ENCODE measurements at regions of chr2 and their contacts with region 1.

Region 1: DNA sequence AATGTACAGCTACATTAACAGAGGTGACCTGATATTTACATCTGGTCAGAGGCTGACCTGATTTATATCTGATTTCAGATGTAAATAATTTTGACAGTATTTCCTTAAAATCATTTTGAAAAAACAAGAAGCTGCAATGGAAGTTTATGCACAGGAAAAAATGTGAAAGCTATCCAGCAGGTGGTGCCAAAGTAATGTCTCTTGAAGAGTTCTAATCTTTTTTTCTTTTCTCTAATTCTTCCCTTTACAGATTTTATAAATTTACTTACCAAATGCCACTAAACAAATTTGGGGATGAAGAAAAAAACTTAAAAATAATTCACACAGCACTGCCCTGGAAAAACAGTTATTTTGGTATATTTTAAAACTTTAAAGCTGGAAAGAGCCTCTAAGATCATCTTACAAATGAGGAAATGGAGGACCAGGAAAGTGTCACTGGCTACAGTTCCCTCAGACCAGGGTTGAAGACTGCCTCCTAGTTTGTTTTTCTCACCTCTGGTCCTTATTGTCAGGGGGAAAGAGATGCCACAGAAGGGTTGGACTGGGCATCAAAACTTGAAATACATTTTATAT is 16.4 kb upstream of the FBLN7 start:
- DNase-seq: peak; percentile 62
- ATAC-seq: no peak
- H3K4me3 Mint-ChIP-seq: no peak overlapping the region
- H3K27ac Mint-ChIP-seq: no peak overlapping the region
- H3K4me1 Mint-ChIP-seq: peaks cover 7% of the 10 kb centered on the region
- H3K27me3 Mint-ChIP-seq: no peaks in the 10 kb centered on the region
- CTCF ChIP-seq: peak; percentile 88

Region 2: DNA sequence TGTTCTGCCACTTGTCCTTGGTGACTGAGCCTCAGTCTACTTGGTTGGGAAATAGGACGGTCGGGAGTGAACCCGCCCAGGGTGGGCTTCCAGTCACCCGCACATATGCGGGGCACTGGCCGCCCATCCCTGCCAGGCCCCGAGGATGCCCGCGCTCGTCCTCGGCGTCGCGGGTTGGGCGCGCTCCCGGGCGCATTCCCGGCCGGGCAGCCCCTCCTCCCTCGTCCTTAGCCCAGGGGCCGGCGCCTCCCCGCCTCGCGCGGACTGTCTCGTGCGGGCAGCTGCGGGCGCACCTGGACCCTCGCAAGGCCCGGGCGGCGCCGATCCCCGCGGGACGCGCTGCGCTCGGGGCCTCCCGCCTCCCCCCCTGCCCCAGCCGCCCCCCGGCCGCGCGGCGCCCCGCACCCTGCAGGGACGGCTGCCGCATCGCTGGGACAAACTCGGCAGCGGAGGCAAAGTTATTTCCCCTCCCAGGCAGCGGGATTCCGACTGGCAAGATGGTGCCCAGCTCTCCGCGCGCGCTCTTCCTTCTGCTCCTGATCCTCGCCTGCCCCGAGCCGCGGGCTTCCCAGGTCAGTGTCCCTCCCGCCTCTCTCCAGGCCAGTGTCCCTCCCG is 16.5 kb after region 1 on chr2 and contains the start of gene FBLN7:
- CTCF ChIA-PET with region 1: interaction called, 18 read pairs
- POLR2A ChIA-PET with region 1: no interaction called
- intact Hi-C with region 1: no loop called
- DNase-seq: no peak
- ATAC-seq: peak; percentile 17
- H3K4me3 Mint-ChIP-seq: peak within 1 kb of the TSS; percentile 49
- H3K27ac Mint-ChIP-seq: no peak within 1 kb of the TSS
- H3K4me1 Mint-ChIP-seq: peaks cover 9% of the 10 kb centered on the region
- H3K27me3 Mint-ChIP-seq: peaks cover 24% of the 10 kb centered on the region
- CTCF ChIP-seq: no peak
- total RNA-seq, gene FBLN7: 7.4 to 7.9 TPM

Region 3: GRCh38 chr2:112216166-112216565 is 94.4 kb after region 1 on chr2:
- CTCF ChIA-PET with region 1: interaction called, 15 read pairs
- POLR2A ChIA-PET with region 1: no interaction called
- intact Hi-C with region 1: no loop called
- DNase-seq: no peak
- ATAC-seq: no peak
- H3K4me3 Mint-ChIP-seq: no peak overlapping the region
- H3K27ac Mint-ChIP-seq: no peak overlapping the region
- H3K4me1 Mint-ChIP-seq: no peaks in the 10 kb centered on the region
- H3K27me3 Mint-ChIP-seq: no peaks in the 10 kb centered on the region
- CTCF ChIP-seq: no peak

Region 4: DNA sequence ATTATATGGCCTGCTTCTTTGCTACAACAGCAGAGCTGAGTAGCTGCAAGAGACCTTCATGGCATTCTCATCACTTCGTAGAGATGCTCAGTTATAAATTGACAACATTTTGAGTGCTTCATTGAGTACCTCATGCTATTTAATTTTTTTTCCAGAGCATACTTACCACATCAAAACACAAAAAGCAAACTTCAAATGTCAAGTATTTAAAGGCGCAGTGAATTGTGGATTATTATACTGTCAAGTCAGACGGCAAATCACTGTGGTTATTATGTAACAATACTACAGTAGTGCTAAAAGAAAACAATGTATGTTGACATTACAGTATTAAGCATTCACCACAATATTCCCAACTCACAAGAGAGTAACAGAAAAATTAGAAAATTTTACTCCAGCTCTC is 120.6 kb after region 1 on chr2:
- CTCF ChIA-PET with region 1: interaction called, 14 read pairs
- POLR2A ChIA-PET with region 1: no interaction called
- intact Hi-C with region 1: no loop called
- DNase-seq: no peak
- ATAC-seq: no peak
- H3K4me3 Mint-ChIP-seq: no peak overlapping the region
- H3K27ac Mint-ChIP-seq: no peak overlapping the region
- H3K4me1 Mint-ChIP-seq: peaks cover 42% of the 10 kb centered on the region
- H3K27me3 Mint-ChIP-seq: no peaks in the 10 kb centered on the region
- CTCF ChIP-seq: no peak

Region 5: GRCh38 chr2:112254466-112255239 is 132.9 kb after region 1 on chr2 and contains the start of gene ZC3H8:
- CTCF ChIA-PET with region 1: interaction called, 9 read pairs
- POLR2A ChIA-PET with region 1: no interaction called
- intact Hi-C with region 1: loop called (anchors 10 kb)
- DNase-seq: peak; percentile 96
- ATAC-seq: peak; percentile 94
- H3K4me3 Mint-ChIP-seq: no peak within 1 kb of the TSS
- H3K27ac Mint-ChIP-seq: peak within 1 kb of the TSS; percentile 93
- H3K4me1 Mint-ChIP-seq: peaks cover 31% of the 10 kb centered on the region
- H3K27me3 Mint-ChIP-seq: no peaks in the 10 kb centered on the region
- CTCF ChIP-seq: no peak
- total RNA-seq, gene ZC3H8: 16.7 to 22.1 TPM

Region 6: DNA sequence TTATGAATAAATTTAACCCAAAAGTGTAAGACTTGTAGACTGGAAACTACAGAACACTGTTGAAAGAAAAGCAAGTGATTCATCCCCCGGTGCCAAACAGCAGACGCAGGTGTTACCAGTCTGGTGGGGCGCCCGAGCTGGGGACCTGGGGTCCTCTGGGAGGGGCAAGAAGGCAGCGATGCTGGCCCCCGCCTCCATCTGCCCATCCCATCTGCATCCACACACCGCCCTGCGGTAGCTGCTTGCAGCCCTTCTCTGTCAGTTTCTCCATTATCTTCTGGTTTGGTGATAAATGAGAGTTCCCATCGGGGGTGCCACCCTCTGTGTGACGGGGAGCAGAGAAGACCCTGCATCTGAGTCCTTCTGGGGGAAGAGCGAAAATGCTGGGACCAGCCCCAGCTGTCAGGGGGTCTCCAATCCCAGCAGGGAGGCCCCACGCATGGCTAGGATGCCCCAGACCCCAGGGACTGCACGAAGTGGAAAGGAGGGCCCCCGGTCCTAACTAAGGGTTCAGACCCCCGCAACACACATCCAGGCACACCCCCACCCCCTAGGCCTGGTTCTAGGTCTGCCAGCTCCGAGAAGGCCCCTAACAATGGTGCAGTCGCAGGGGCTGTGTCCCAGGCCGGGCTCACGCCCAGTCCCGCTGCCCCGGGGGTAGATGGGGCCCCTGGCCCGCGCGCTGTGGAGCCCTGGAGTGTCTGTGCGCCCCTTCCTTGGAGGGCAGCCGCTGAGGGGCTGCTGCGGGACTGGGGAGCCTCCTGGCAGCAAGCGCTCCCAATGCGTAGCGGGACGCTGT is 312.4 kb after region 1 on chr2:
- CTCF ChIA-PET with region 1: interaction called, 4 read pairs
- POLR2A ChIA-PET with region 1: no interaction called
- intact Hi-C with region 1: loop called (anchors 5 kb)
- DNase-seq: peak; percentile 4
- ATAC-seq: no peak
- H3K4me3 Mint-ChIP-seq: no peak overlapping the region
- H3K27ac Mint-ChIP-seq: no peak overlapping the region
- H3K4me1 Mint-ChIP-seq: peaks cover 13% of the 10 kb centered on the region
- H3K27me3 Mint-ChIP-seq: peaks cover 3% of the 10 kb centered on the region
- CTCF ChIP-seq: no peak

Region 7: GRCh38 chr2:112941753-112942658 is 820.2 kb after region 1 on chr2:
- CTCF ChIA-PET with region 1: no interaction called
- POLR2A ChIA-PET with region 1: no interaction called
- intact Hi-C with region 1: no loop called
- DNase-seq: peak; percentile 88
- ATAC-seq: peak; percentile 99
- H3K4me3 Mint-ChIP-seq: no peak overlapping the region
- H3K27ac Mint-ChIP-seq: no peak overlapping the region
- H3K4me1 Mint-ChIP-seq: peaks cover 9% of the 10 kb centered on the region
- H3K27me3 Mint-ChIP-seq: no peaks in the 10 kb centered on the region
- CTCF ChIP-seq: peak; percentile 84

Measured in activated CD8-positive, alpha-beta T cell treated with anti-CD3 and anti-CD28 coated beads for 36 hours (primary cell).